ENCODE measurements at regions of chr12 and their contacts with region 1.

Region 1: GRCh38 chr12:113912760-113913329 is 53.3 kb downstream of the RBM19 start:
- DNase-seq: peak; percentile 64
- H3K4me3 ChIP-seq: no peak overlapping the region
- H3K27ac ChIP-seq: no peak overlapping the region
- H3K4me1 ChIP-seq: peaks cover 17% of the 10 kb centered on the region
- CTCF ChIP-seq: peak; percentile 96

Region 2: DNA sequence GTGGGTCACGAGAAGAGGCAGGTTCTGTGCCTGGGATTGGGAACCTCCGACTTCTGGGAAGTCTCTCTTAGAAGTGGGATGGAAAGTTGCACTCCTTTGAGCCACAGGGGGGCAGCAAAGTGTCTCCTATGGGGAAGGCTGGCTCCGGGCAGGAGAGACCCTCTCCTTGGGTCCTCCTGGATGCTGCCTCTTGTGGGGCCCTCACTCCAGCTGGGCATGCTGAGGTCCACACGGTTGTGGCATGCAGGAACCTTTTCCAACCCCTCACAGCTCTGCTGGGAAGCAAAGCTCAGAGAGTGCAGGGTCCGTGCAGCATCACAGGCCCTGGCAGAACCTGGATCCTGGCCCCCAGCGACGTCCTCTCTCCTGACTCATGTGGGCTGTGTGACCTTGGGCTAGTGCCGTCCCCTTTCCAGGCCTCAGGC is 473.2 kb before region 1 on chr12:
- CTCF ChIA-PET with region 1: no interaction called
- POLR2A ChIA-PET with region 1: no interaction called
- intact Hi-C with region 1: loop called (anchors 2 kb)
- DNase-seq: peak; percentile 59
- H3K4me3 ChIP-seq: no peak overlapping the region
- H3K27ac ChIP-seq: no peak overlapping the region
- H3K4me1 ChIP-seq: no peaks in the 10 kb centered on the region
- CTCF ChIP-seq: peak; percentile 91

Region 3: GRCh38 chr12:113462117-113462774 is 450.6 kb before region 1 on chr12:
- CTCF ChIA-PET with region 1: no interaction called
- POLR2A ChIA-PET with region 1: no interaction called
- intact Hi-C with region 1: loop called (anchors 5 kb)
- DNase-seq: peak; percentile 61
- H3K4me3 ChIP-seq: no peak overlapping the region
- H3K27ac ChIP-seq: no peak overlapping the region
- H3K4me1 ChIP-seq: peaks cover 27% of the 10 kb centered on the region
- CTCF ChIP-seq: peak; percentile 79

Measured in OCI-LY7 (cell line).